ENCODE measurements at regions of chr16 and their contacts with region 1.

Region 1: DNA sequence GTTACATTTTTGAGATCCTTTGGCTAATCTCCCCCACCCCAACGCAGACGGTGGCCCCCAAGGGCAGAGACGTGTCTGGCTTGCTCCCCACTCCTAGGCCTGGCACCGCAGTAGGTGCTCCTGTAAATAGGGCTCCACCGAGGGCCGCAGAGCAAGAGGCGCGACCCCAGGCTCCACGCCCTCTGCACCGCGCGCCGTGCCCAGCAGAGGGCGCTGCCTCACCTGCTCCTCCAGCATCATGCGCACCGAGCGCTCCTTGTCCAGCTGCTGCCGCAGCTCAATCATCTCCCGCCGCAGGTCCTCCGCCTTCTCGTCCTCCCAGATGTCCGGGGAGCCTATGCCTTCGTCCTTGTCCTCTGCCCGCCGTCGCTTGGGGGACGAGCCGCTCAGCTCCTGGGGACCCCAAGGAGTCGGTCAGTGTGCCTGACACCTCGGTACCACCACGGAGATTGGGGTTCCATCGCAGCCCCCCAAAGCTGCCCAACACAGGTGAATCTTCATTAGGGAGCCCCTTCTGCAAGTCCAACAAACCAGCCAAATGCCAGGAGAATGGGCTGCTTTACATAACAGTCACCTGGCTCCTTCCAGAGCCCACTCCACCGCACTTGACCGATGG is 11.2 kb downstream of the TFAP4 start:
- DNase-seq: peak; percentile 78
- H3K4me3 ChIP-seq: no peak overlapping the region; a peak in 1 of 4 replicates
- H3K27ac ChIP-seq: no peak overlapping the region
- H3K4me1 ChIP-seq: peaks cover 6 to 23% of the 10 kb centered on the region in 2 experiments; a peak in 1 of 4 replicates
- H3K27me3 ChIP-seq: no peaks in the 10 kb centered on the region
- CTCF ChIP-seq: peak; percentile 68
- EP300 ChIP-seq: no peak
- RAD21 ChIP-seq: peak; percentile 55

Region 2: DNA sequence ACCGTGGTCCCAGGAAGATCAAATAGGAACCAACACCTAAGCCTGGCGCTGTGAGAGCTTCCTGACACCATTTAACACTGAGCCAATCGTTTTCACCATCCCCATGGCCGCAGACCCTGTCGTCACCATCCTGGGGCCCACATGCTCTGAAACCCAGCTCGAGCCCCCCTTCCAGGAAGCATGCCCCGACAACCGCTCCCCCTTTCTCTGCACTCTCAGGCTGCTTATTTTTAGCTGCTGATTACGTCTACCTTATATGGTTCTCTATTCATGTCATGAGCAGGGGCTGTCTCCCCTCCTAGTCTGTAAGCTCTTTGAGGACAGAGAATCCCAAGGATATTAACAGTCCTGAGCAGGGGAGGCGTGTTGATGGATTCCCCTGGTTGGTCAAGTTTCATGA is 30.3 kb before region 1 on chr16:
- CTCF ChIA-PET with region 1: no interaction called
- POLR2A ChIA-PET with region 1: no interaction called
- DNase-seq: no peak
- H3K4me3 ChIP-seq: no peak overlapping the region
- H3K27ac ChIP-seq: no peak overlapping the region
- H3K4me1 ChIP-seq: no peaks in the 10 kb centered on the region
- H3K27me3 ChIP-seq: no peaks in the 10 kb centered on the region
- CTCF ChIP-seq: no peak
- EP300 ChIP-seq: no peak
- RAD21 ChIP-seq: no peak

Region 3: GRCh38 chr16:4315186-4316109 is 53.8 kb after region 1 on chr16 and contains the start of gene GLIS2:
- CTCF ChIA-PET with region 1: interaction called, 11 read pairs
- POLR2A ChIA-PET with region 1: interaction called, 4 read pairs
- DNase-seq: peak; percentile 94
- H3K4me3 ChIP-seq: peak within 1 kb of the TSS; percentile 76 to 81
- H3K27ac ChIP-seq: peak within 1 kb of the TSS; percentile 78 to 84
- H3K4me1 ChIP-seq: peaks cover 13 to 41% of the 10 kb centered on the region in 2 experiments; a peak in 1 of 4 replicates
- H3K27me3 ChIP-seq: no peaks in the 10 kb centered on the region
- CTCF ChIP-seq: no peak
- EP300 ChIP-seq: no peak
- RAD21 ChIP-seq: no peak
- polyA plus RNA-seq, gene GLIS2: 3.3 and 6.5 TPM in 2 replicates

Measured in SK-N-SH (cell line).